Body of pancreas (tissue), 4 donors: ENCODE measurements at regions of chr10 and their contacts with region 1.

Region 1: DNA sequence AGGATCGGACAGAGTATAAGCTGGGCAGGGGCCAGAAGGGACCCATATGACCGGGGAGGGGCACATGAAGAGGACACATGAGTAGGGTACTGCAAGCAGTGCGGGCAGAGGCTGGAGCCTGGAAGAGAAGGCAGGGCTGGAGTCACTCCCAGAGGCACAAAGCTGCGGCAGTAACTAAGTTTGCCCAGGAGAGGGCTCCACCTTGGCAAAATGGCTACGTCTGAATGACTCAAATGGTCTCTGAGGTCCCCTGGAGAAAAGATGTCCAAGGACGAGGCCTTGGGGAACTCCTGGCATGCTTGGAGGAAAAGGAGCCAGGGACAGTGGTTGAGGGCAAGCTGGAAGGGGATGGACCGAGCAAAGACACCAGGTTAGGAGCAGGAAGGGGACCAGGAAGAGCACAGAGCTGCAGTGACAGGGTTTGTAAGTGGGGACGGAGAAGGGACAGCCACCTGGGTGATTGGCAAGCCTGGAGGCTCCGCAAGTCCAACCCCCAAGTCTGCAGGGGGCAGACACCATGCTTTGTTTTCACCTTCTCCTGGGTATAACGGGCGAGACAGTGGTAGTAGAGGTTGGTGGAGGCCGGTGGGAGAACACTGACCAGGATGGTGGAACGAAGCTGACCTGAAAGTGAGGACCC is 43.1 kb upstream of the LBX1 start:
- DNase-seq: peak; percentile 65 to 73 (median 66)
- ATAC-seq: peak; percentile 81
- H3K4me3 ChIP-seq: no peak overlapping the region
- H3K27ac ChIP-seq: no peak overlapping the region
- H3K4me1 ChIP-seq: no peaks in the 10 kb centered on the region
- H3K27me3 ChIP-seq: no peaks in the 10 kb centered on the region
- CTCF ChIP-seq: peak; percentile 68 to 79 (median 72)
- POLR2A ChIP-seq: no peak

Region 2: DNA sequence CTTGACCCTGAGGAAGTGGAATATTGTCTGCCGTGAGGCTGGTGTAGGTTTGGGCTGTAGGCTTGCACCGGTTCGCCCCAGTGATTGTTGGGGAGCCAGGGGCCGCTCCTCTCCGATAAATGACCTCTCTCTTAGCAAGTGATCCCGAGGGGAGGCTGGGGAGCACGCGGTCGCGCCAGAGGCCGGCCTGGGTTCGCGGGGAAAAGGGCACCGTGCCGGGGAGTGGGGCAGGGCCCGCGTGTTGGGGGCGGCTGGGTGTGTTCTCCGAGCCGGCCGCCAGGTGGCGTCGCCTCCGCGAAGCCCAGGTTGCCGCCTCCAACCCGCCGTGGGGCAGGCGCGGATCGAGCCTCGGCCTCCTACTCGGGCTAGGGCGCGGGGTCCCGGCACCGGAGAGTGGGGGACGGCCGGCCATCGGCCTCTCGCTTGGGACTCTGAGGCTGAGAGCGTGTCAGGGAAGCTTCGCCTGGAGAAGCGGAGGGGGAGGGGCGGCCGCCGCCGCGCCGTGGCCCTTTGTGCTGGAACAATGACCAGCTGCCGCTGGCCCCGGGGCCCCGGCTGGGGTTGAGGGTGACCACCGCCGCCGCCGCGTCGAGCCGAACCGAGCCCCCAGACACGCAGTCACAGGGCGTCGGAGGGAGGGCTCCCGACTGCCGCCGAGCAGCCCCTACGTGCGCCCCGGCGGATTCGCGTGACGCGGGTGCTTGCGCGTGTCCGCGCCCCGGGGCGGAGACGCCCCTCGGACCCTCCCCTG is 273.2 kb before region 1 on chr10:
- intact Hi-C with region 1: no loop called
- DNase-seq: peak; percentile 76 to 81 (median 80)
- ATAC-seq: peak; percentile 65
- H3K4me3 ChIP-seq: peak overlapping the region; percentile 18 to 31
- H3K27ac ChIP-seq: peak overlapping the region; percentile 87 to 98 (median 97)
- H3K4me1 ChIP-seq: peaks cover 49% of the 10 kb centered on the region
- H3K27me3 ChIP-seq: no peaks in the 10 kb centered on the region
- CTCF ChIP-seq: peak; percentile 91 to 95 (median 93)
- POLR2A ChIP-seq: peak; percentile 70 to 78 (median 74)

Region 3: GRCh38 chr10:101438881-101439391 is 166.6 kb after region 1 on chr10:
- intact Hi-C with region 1: loop called (anchors 10 kb)
- DNase-seq: no peak
- ATAC-seq: no peak
- H3K4me3 ChIP-seq: no peak overlapping the region
- H3K27ac ChIP-seq: no peak overlapping the region
- H3K4me1 ChIP-seq: no peaks in the 10 kb centered on the region
- H3K27me3 ChIP-seq: no peaks in the 10 kb centered on the region
- CTCF ChIP-seq: no peak
- POLR2A ChIP-seq: no peak

Region 4: DNA sequence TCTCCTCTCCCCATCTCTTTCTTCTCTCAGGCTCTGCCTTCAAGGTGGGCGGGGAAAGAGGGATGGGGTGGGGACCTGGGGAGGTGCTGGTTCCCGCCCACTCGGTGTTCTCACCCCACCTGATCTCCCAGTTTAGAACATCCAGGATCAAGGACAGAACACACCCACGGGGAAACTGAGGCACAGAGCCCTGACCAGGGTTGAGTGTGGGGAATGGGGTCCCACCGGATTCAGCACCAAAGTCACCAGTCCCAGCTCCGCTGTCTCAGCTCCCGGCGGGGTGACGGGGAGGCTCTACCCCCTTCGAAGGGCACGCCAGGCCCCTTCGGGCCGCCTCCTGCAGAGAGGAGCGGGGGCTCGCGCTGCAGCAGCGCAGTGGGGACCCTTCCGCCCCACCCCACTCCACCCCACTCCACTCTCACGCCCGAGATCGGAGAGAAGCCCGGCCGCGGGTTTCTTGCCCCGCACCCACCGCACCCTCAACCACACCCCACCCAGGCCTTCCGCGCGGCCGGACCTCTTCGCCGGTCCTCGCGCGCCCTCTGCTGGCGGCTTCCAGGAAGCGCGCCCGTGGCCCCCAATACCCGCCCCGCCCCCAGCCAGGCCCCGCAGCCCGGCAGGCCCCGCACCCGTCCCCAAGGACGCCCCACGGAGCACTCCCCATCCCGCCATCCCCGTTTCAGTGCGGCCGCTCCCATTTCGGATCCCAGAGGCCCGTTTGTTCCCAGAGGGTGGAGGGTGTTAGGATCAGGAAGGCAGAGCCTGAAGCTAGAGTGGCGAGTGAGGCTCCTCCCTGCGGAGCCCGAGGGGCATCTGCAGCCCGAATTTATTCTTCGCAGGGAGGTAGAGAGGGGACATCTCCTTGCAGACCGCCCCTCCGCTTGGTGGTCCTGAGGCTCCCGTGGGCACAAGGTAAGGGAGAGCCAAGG is 297.8 kb after region 1 on chr10:
- intact Hi-C with region 1: loop called (anchors 10 kb)
- DNase-seq: peak; percentile 77 to 88 (median 80)
- ATAC-seq: peak; percentile 79
- H3K4me3 ChIP-seq: no peak overlapping the region
- H3K27ac ChIP-seq: no peak overlapping the region
- H3K4me1 ChIP-seq: peaks cover 26% of the 10 kb centered on the region
- H3K27me3 ChIP-seq: peaks cover 0 to 16% of the 10 kb centered on the region in 2 donors
- CTCF ChIP-seq: peak; percentile 66 to 94 (median 88)
- POLR2A ChIP-seq: no peak

Region 5: GRCh38 chr10:102064868-102065560 is 792.7 kb after region 1 on chr10 and contains the start of gene HPS6:
- intact Hi-C with region 1: no loop called
- DNase-seq: peak; percentile 91 to 93 (median 93)
- ATAC-seq: peak; percentile 98
- H3K4me3 ChIP-seq: peak within 1 kb of the TSS; percentile 88 to 92
- H3K27ac ChIP-seq: peak within 1 kb of the TSS; percentile 50 to 96 (median 88)
- H3K4me1 ChIP-seq: peaks cover 35% of the 10 kb centered on the region
- H3K27me3 ChIP-seq: no peaks in the 10 kb centered on the region
- CTCF ChIP-seq: peak in 5 of 7 experiments; percentile 8 to 40 (median 22)
- POLR2A ChIP-seq: peak; percentile 92 to 94 (median 93)
- total RNA-seq, gene HPS6: 16.6 to 33.0 TPM